Posterior vena cava (tissue), 2 donors: ENCODE measurements at regions of chr12 and their contacts with region 1.

Region 1: DNA sequence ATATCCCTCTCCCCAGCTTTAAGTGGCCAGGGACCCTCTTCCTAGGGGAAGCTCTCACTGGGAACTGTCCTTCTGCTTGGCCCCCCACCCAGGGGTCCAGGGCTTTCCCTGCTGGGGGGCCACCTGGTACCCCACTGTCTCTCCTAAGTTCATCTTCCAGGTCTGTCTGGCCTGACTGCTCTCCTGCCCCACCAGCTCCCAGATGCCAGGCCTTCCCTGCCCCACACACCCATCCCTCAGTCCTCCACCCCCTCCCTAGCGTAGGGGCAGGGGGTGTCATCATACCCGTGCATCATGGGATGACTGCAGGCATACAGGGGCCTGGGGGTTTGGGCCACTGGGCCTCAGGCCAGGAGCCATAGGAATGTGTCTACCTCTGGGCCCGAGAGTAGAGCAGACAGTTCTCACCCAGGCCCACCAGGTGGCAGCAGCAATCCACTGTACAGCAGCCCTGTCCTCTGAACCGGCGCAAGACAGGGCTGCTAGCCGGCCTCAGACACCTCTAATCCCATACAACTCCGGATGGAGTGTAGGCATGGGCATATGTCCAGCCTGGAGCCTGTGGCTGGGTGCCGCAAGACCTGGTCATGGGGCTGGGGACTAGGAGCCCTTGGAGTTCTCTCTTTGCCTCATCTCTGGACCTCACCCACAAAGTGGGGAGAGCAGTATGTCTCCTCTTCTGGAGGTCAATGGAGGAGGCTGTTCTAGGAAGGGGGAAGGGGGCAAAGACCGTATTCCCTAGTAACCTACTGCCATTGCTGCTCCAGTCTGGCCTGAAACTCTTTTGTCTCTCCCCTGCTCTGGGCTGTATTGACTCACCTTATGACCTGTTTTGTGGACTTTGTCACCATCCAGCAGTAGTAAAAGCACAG is 10.0 kb upstream of the SMARCD1 start:
- DNase-seq: peak; percentile 94

Region 2: GRCh38 chr12:50174971-50175715 is 100.0 kb after region 1 on chr12:
- intact Hi-C with region 1: loop called in 1 of 2 experiments (anchors 5 kb)
- DNase-seq: no peak

Region 3: GRCh38 chr12:50314629-50315312 is 239.6 kb after region 1 on chr12:
- intact Hi-C with region 1: loop called in 1 of 2 experiments (anchors 10 kb)
- DNase-seq: no peak

Region 4: DNA sequence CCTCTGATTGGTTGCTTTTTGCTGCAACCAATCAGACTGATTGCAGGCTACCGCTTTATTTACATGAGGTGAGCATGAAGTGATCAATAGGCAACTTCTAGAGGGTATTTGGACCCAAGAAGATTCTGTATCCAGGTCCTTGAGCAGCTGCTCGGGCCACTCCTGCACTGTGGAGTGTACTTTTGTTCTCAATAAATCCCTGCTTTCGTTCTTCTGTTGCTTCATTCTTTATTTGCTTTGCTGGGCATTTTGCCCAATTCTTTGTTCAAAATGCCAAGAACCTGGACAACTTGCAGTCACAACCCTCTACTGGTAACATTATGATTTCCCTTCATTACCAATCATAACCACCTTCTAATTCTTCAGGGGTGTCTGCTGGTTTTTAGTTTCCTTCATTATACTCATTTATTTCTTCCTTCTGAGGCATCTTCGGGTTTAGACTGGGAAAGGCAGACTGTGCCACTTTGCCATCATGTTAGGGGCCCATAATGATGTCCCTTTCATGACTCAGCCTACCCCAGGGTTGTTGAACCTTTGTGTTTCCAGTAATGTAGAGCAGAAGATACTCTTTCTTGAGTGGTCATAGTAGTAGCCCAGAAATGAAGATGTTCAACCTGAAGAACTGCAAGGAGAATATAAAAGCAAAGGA is 251.6 kb after region 1 on chr12:
- intact Hi-C with region 1: loop called in 1 of 2 experiments (anchors 10 kb)
- DNase-seq: no peak